ENCODE measurements at regions of chr20 and their contacts with region 1.

Region 1: GRCh38 chr20:18793625-18794427 is 19.8 kb upstream of the SCP2D1 start:
- DNase-seq: peak; percentile 85 to 91
- ATAC-seq: peak; percentile 97 to 100 (median 99)
- H3K4me3 ChIP-seq: peak overlapping the region; percentile 39 to 88 (median 78)
- H3K27ac ChIP-seq: peak overlapping the region; percentile 59 to 96 (median 87)
- H3K4me1 ChIP-seq: peaks cover 0 to 13% (median 9%) of the 10 kb centered on the region in 9 donors
- H3K27me3 ChIP-seq: peaks cover 0 to 4% (median 0%) of the 10 kb centered on the region in 7 donors
- CTCF ChIP-seq: peak in 4 of 9 donors; percentile 14 to 41 (median 26)

Region 2: GRCh38 chr20:18632196-18633009 is 161.4 kb before region 1 on chr20:
- intact Hi-C with region 1: loop called in 2 of 10 experiments (anchors 5 to 10 kb)
- DNase-seq: peak; percentile 53 to 57
- ATAC-seq: peak; percentile 83 to 94 (median 88)
- H3K4me3 ChIP-seq: no peak overlapping the region
- H3K27ac ChIP-seq: no peak overlapping the region
- H3K4me1 ChIP-seq: no peaks in the 10 kb centered on the region
- H3K27me3 ChIP-seq: no peaks in the 10 kb centered on the region
- CTCF ChIP-seq: peak; percentile 59 to 94 (median 83)

Region 3: DNA sequence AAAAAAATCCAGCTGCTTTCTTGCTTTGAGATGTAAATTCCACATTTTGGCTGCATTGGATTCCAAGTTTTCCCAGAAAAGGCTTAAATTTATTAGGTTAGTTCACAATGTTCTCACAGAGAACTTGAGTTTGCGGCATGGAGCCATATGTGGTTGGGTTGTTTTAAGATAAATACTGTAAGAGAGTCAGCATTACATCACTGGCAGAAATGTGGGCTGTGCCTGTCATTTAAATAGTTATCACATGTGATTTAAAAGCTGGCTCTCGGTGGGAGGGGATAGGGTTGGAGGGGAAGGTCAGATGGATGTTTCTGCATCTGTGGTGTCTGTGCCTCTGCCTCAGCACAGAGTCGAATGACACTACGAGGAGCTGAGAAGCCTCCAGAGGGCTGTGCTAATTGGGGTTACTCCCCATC is 54.1 kb before region 1 on chr20:
- intact Hi-C with region 1: loop called in 1 of 10 experiments (anchors 5 kb)
- DNase-seq: no peak
- ATAC-seq: peak in 6 of 8 donors; percentile 41 to 77 (median 59)
- H3K4me3 ChIP-seq: peak overlapping the region in 1 of 10 donors; percentile 3
- H3K27ac ChIP-seq: peak overlapping the region in 2 of 10 donors; percentile 25 to 44
- H3K4me1 ChIP-seq: peaks cover 0 to 22% (median 0%) of the 10 kb centered on the region in 9 donors
- H3K27me3 ChIP-seq: no peaks in the 10 kb centered on the region
- CTCF ChIP-seq: no peak

Measured in heart right ventricle (tissue), 16 donors.